ENCODE measurements at regions of chr4 and their contacts with region 1.

Region 1: GRCh38 chr4:98658287-98659105 is at the start of gene TSPAN5:
- DNase-seq: peak; percentile 56 to 93 (median 84)
- ATAC-seq: peak; percentile 67
- H3K4me3 ChIP-seq: peak within 1 kb of the TSS; percentile 89
- H3K4me3 Mint-ChIP-seq: peak within 1 kb of the TSS; percentile 89
- H3K27ac ChIP-seq: peak within 1 kb of the TSS in 1 of 2 donors; percentile 39
- H3K27ac Mint-ChIP-seq: peak within 1 kb of the TSS; percentile 98
- H3K4me1 ChIP-seq: peaks cover 50% of the 10 kb centered on the region
- H3K4me1 Mint-ChIP-seq: peaks cover 87% of the 10 kb centered on the region
- H3K27me3 ChIP-seq: no peaks in the 10 kb centered on the region
- H3K27me3 Mint-ChIP-seq: no peaks in the 10 kb centered on the region
- CTCF ChIP-seq: no peak
- total RNA-seq, gene TSPAN5: 1.8 to 2.8 TPM

Region 2: GRCh38 chr4:98143001-98143899 is 515.2 kb before region 1 on chr4 and contains the start of gene STPG2:
- CTCF ChIA-PET with region 1: no interaction called
- POLR2A ChIA-PET with region 1: no interaction called
- intact Hi-C with region 1: loop called in 1 of 2 experiments (anchors 10 kb)
- DNase-seq: peak; percentile 85 to 97 (median 94)
- ATAC-seq: peak; percentile 98
- H3K4me3 ChIP-seq: peak within 1 kb of the TSS; percentile 88
- H3K4me3 Mint-ChIP-seq: peak within 1 kb of the TSS; percentile 90
- H3K27ac ChIP-seq: peak within 1 kb of the TSS; percentile 75 to 96
- H3K27ac Mint-ChIP-seq: peak within 1 kb of the TSS; percentile 93
- H3K4me1 ChIP-seq: peaks cover 17% of the 10 kb centered on the region
- H3K4me1 Mint-ChIP-seq: peaks cover 21% of the 10 kb centered on the region
- H3K27me3 ChIP-seq: no peaks in the 10 kb centered on the region
- H3K27me3 Mint-ChIP-seq: no peaks in the 10 kb centered on the region
- CTCF ChIP-seq: peak; percentile 73
- total RNA-seq, gene STPG2: 0.22 to 0.28 TPM

Region 3: DNA sequence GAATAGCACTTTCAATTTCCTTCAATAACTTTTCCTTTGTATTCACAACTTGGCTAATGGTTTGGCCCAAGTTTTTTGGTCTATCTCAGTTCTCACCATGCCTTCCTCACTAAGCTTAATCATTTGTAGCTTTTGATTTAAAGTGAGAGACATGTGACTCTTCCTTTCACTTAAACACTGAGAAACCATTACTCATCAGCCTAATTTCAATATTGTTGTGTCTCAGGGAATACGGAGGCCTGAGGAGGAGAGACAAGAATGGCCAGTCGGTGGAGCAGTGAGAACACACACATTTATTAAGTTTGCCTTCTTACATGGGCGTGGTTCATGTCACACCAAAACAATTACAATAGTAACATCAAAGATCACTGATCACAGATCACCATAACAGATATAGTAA is 56.8 kb before region 1 on chr4:
- CTCF ChIA-PET with region 1: no interaction called
- POLR2A ChIA-PET with region 1: interaction called, 6 read pairs
- intact Hi-C with region 1: loop called in 1 of 2 experiments (anchors 5 kb)
- DNase-seq: peak in 4 of 14 experiments; percentile 16 to 40 (median 24)
- ATAC-seq: peak; percentile 47
- H3K4me3 ChIP-seq: no peak overlapping the region
- H3K4me3 Mint-ChIP-seq: peak overlapping the region; percentile 39
- H3K27ac ChIP-seq: no peak overlapping the region
- H3K27ac Mint-ChIP-seq: peak overlapping the region; percentile 16
- H3K4me1 ChIP-seq: peaks cover 20% of the 10 kb centered on the region
- H3K4me1 Mint-ChIP-seq: peaks cover 53% of the 10 kb centered on the region
- H3K27me3 ChIP-seq: no peaks in the 10 kb centered on the region
- H3K27me3 Mint-ChIP-seq: no peaks in the 10 kb centered on the region
- CTCF ChIP-seq: no peak

Region 4: DNA sequence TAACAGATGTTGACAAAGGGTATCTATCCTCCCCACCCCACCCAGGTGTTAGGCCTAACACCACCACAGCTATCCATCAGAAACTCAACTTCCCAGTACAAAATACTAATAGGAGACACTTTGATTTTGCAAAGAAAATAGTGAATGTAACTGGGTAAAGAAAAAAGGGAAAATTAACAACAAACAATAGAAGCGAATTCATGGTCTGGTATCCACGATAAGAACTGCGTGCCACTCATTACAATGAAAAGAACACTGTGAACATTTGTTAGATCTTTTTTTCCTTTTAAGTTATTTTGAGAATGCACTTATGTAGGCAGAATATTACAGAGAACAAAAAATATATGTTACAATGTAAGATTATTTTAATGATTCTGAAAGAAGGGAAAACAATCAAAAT is 12.1 kb before region 1 on chr4:
- CTCF ChIA-PET with region 1: interaction called, 5 read pairs
- POLR2A ChIA-PET with region 1: interaction called, 16 read pairs
- intact Hi-C with region 1: loop called in 1 of 2 experiments (anchors 2 kb)
- DNase-seq: no peak
- ATAC-seq: no peak
- H3K4me3 ChIP-seq: no peak overlapping the region
- H3K4me3 Mint-ChIP-seq: no peak overlapping the region
- H3K27ac ChIP-seq: no peak overlapping the region
- H3K27ac Mint-ChIP-seq: peak overlapping the region; percentile 8
- H3K4me1 ChIP-seq: peaks cover 16% of the 10 kb centered on the region
- H3K4me1 Mint-ChIP-seq: peaks cover 65% of the 10 kb centered on the region
- H3K27me3 ChIP-seq: no peaks in the 10 kb centered on the region
- H3K27me3 Mint-ChIP-seq: no peaks in the 10 kb centered on the region
- CTCF ChIP-seq: no peak

Region 5: DNA sequence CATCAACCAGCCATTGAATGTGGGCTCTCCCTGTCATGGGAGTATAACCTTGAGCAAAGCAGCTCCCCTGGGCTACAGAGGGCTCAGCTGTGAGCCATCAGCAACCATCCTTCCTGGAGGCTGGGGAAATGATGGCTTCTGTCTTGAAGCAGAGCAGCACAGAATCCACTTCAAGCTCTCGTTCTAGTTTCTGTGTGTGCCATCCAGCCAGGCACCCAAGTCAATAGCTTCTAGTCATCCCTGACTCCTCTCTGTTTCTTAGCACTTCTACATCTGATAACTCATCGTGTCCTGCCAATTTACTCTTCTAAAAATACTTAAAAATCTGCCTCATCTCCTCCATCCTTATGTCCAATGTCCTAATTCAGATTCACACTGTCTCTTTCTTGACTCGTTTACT is 42.2 kb after region 1 on chr4:
- CTCF ChIA-PET with region 1: no interaction called
- POLR2A ChIA-PET with region 1: no interaction called
- intact Hi-C with region 1: loop called in 1 of 2 experiments (anchors 5 kb)
- DNase-seq: no peak
- ATAC-seq: no peak
- H3K4me3 ChIP-seq: no peak overlapping the region
- H3K4me3 Mint-ChIP-seq: no peak overlapping the region
- H3K27ac ChIP-seq: no peak overlapping the region
- H3K27ac Mint-ChIP-seq: no peak overlapping the region
- H3K4me1 ChIP-seq: peaks cover 11% of the 10 kb centered on the region
- H3K4me1 Mint-ChIP-seq: peaks cover 15% of the 10 kb centered on the region
- H3K27me3 ChIP-seq: no peaks in the 10 kb centered on the region
- H3K27me3 Mint-ChIP-seq: no peaks in the 10 kb centered on the region
- CTCF ChIP-seq: no peak

Region 6: DNA sequence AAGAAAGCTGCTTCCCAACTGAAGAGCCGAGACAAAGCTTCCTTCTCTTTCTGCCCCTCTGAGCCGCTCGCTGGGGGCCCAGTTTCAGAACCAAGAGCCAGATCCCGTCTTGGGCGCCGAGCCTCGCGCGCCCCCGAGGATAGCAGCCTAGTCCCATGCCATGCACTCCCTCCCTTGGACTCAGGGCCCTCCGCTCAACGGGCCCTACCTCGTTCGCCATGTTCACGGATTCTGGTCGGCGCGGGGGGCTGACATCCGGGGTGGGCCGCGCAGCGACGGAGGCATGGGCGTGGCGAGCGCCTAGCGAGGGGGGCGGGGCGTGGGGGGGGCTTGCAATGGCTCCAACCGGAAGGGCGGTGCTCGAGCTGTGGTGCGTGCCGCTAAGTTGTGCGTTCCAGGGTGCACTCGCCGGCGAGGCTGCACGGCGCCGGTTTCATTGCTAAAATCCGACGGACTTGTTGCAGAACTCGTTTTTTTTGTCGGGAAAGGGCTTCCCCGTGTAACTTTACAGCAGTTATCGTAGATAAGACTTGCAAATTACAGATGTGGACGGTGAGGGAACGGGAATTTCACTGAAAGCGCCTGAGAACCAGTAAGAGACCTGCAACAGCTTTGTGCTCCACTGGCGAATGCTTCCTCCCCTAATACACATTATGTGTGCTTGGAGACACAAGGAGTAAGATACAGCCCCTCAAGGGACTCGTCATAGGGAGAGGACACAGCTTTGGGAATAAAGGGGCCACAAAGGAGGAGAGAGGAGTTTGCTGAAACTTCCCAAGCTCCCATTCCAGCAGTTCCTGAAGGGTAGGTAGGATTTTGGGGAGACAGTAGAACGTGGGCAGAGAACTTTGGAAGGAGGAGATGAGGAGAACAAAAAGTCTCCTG is 430.2 kb after region 1 on chr4 and contains the start of gene ADH5:
- CTCF ChIA-PET with region 1: no interaction called
- POLR2A ChIA-PET with region 1: no interaction called
- intact Hi-C with region 1: loop called in 1 of 2 experiments (anchors 5 kb)
- DNase-seq: peak; percentile 86 to 96 (median 91)
- ATAC-seq: peak; percentile 95
- H3K4me3 ChIP-seq: peak within 1 kb of the TSS; percentile 93
- H3K4me3 Mint-ChIP-seq: peak within 1 kb of the TSS; percentile 95
- H3K27ac ChIP-seq: peak within 1 kb of the TSS; percentile 76 to 82
- H3K27ac Mint-ChIP-seq: peak within 1 kb of the TSS; percentile 93
- H3K4me1 ChIP-seq: peaks cover 25% of the 10 kb centered on the region
- H3K4me1 Mint-ChIP-seq: peaks cover 65% of the 10 kb centered on the region
- H3K27me3 ChIP-seq: no peaks in the 10 kb centered on the region
- H3K27me3 Mint-ChIP-seq: no peaks in the 10 kb centered on the region
- CTCF ChIP-seq: no peak
- total RNA-seq, gene ADH5: 49.1 to 52.0 TPM

Measured in CD4-positive, alpha-beta T cell (primary cell).